PC-3 (cell line): ENCODE measurements at regions of chr18 and their contacts with region 1.

Region 1: DNA sequence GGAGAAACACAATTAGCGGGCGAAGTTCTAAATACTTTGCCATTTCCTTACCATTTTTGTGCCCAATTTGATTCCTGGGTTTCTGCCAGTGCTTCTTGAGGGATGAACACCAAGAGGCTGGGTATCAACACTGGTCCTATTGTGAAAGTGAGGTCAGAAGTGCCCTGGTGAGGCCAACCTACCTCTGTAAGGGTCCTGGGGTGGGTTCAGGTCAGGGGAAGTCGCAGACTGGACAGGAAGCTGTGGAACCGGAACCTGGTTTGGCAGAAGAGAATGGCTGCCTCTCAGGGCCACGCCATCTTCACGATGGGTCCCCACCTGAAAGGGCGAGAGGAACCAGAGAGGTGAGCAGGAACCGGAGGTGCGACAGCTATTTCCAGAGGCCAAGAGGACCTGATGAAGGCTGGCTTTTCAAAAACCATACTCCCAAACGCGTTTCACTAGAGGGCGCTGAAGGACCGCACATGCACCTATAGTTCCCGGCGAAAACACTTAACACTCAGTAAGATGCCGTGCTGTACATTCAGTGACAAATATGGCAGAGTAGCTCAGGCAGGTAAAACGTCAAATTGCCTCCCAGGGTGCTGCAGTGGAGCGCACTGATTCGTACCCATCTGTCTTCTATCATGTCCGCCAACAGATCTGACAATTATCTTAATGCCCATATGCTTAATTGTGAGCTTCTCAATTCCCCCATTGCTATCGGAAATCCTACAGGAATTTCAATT is 275.3 kb upstream of the CCDC68 start:
- DNase-seq: peak; percentile 88
- ATAC-seq: peak; percentile 89
- H3K4me3 ChIP-seq: peak overlapping the region; percentile 62
- H3K27ac ChIP-seq: no peak overlapping the region
- H3K4me1 ChIP-seq: peaks cover 23% of the 10 kb centered on the region
- H3K27me3 ChIP-seq: no peaks in the 10 kb centered on the region
- CTCF ChIP-seq: peak; percentile 93

Region 2: DNA sequence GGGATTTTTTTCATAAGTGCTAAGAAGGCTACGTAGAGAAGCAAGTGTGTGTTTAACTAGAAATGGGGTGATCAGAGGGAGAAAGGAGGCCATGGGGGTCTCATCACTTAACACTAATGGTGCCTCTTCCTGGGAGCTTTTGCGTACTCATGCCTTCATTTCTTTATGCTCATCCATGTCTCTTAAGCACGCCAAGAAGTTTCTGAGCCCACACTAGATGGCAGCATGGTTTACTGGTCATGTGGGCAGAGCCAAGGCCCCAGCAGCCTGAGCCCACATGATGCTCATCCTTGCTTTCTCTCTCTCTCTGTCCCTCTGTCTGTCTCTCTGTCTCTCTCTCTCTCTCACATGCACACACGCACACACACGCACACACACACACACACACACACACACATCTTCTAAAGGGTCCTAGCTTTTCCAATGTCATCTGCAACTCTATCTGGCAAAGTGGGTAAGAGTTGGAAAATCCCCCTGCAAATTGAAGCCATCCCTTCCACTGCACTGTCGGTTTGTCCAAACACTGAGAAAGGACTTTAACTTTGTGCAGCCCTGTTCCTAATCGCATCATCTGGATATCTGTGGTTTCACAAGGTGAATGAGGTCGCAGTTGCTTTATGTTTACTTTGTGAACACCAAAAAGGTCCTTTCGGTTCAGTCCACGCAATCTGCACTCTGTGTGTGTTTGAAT is 138.1 kb before region 1 on chr18:
- CTCF ChIA-PET with region 1: no interaction called
- POLR2A ChIA-PET with region 1: no interaction called
- intact Hi-C with region 1: loop called (anchors 2 kb)
- DNase-seq: peak; percentile 72
- ATAC-seq: peak; percentile 83
- H3K4me3 ChIP-seq: no peak overlapping the region
- H3K27ac ChIP-seq: no peak overlapping the region
- H3K4me1 ChIP-seq: peaks cover 15% of the 10 kb centered on the region
- H3K27me3 ChIP-seq: no peaks in the 10 kb centered on the region
- CTCF ChIP-seq: peak; percentile 68

Region 3: DNA sequence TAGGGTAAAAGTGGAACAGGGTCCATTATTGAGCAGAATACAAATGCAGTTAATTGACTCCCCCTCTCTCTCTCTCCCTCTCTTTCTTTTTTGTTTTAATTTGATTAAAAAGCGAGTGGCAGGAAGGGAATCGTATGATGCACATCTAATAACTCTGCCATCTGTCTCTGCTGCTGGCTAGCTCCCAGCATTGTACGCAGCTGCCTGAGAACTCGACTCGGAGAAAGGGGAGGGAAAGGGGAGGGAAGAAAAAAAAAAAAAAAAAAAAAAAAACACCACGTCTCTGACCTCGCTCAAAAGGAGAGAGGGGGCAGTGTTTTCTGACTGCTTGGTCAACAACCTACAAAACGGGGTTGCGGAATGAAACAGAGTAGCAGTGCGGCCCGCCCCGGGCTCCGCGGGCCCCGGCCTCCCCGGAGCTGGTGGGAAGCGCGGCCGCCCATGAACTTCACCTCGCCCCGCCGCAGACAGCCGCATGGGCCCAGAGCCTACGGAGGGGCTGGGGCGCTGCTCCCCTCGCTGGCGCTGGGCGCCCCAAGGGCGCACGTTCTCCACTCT is 87.7 kb after region 1 on chr18:
- CTCF ChIA-PET with region 1: interaction called, 23 read pairs
- POLR2A ChIA-PET with region 1: no interaction called
- intact Hi-C with region 1: loop called (anchors 2 kb)
- DNase-seq: peak; percentile 81
- ATAC-seq: peak; percentile 67
- H3K4me3 ChIP-seq: peak overlapping the region; percentile 73
- H3K27ac ChIP-seq: peak overlapping the region; percentile 8
- H3K4me1 ChIP-seq: peaks cover 4% of the 10 kb centered on the region; the same call in 1 of the 2 replicates
- H3K27me3 ChIP-seq: no peaks in the 10 kb centered on the region
- CTCF ChIP-seq: no peak; the same call in 1 of the 2 replicates

Region 4: GRCh38 chr18:55415258-55415871 is 180.8 kb after region 1 on chr18:
- CTCF ChIA-PET with region 1: interaction called, 3 read pairs
- POLR2A ChIA-PET with region 1: no interaction called
- intact Hi-C with region 1: loop called (anchors 1 kb)
- DNase-seq: peak; percentile 74
- ATAC-seq: peak; percentile 91
- H3K4me3 ChIP-seq: no peak overlapping the region
- H3K27ac ChIP-seq: no peak overlapping the region
- H3K4me1 ChIP-seq: peaks cover 10% of the 10 kb centered on the region; the same call in 1 of the 2 replicates
- H3K27me3 ChIP-seq: no peaks in the 10 kb centered on the region
- CTCF ChIP-seq: peak; percentile 96

Region 5: GRCh38 chr18:55781481-55781957 is 547.0 kb after region 1 on chr18:
- CTCF ChIA-PET with region 1: interaction called, 8 read pairs
- POLR2A ChIA-PET with region 1: no interaction called
- intact Hi-C with region 1: loop called (anchors 1 kb)
- DNase-seq: peak; percentile 69
- ATAC-seq: peak; percentile 71
- H3K4me3 ChIP-seq: no peak overlapping the region
- H3K27ac ChIP-seq: no peak overlapping the region
- H3K4me1 ChIP-seq: peaks cover 9% of the 10 kb centered on the region; the same call in 1 of the 2 replicates
- H3K27me3 ChIP-seq: no peaks in the 10 kb centered on the region
- CTCF ChIP-seq: peak; percentile 89

Region 6: DNA sequence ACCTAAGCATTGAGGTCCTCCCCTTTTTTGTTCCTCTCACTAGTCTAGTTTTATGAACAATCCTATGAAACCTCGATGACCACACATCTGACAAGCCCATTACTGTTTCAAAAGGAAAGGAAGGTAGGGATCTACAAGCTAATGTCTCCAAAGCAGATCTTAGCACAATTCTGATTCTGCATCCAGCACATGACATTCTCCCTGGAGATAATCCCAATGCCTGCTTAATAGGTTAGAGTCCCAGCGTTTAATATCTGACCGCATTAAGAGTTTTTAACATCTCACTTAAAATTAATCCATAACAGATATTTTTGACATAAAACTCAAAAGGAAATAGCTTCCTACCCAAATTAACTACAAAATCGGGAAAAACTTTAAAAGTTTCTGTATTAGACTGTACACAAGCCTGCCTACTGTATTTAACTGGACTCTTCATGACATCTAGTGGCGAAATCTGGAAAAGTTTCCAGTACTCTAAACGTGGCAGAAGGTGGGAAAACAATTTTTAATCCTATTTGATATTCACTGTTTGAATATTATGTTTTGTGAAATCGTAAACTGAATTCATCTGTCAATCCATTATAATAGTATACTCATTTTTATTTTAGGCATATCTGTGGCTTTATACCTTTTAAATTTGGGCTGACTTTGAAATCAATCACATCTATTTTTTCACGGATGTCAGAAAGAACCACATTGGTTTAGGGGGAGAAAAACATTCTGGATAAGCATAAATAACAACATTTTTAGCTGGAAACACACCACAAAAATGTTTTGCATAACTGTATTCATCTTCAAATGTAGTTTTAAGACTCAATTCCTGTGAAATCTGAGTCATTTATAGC is 1341.5 kb after region 1 on chr18:
- CTCF ChIA-PET with region 1: no interaction called
- POLR2A ChIA-PET with region 1: no interaction called
- intact Hi-C with region 1: loop called (anchors 5 kb)
- DNase-seq: peak; percentile 80
- ATAC-seq: peak; percentile 91
- H3K4me3 ChIP-seq: no peak overlapping the region
- H3K27ac ChIP-seq: no peak overlapping the region
- H3K4me1 ChIP-seq: 0 out of 2 replicates have a peak, but pooled peaks cover 8% of the 10 kb centered on the region
- H3K27me3 ChIP-seq: no peaks in the 10 kb centered on the region
- CTCF ChIP-seq: peak; percentile 87